ENCODE measurements at regions of chr2 and their contacts with region 1.

Region 1: GRCh38 chr2:232327105-232328041 is 51.2 kb upstream of the ALPP start:
- DNase-seq: peak; percentile 31
- H3K4me3 ChIP-seq: no peak overlapping the region
- H3K27ac ChIP-seq: no peak overlapping the region
- H3K4me1 ChIP-seq: peaks cover 24% of the 10 kb centered on the region
- H3K27me3 ChIP-seq: no peaks in the 10 kb centered on the region
- CTCF ChIP-seq: peak; percentile 78 to 81

Region 2: DNA sequence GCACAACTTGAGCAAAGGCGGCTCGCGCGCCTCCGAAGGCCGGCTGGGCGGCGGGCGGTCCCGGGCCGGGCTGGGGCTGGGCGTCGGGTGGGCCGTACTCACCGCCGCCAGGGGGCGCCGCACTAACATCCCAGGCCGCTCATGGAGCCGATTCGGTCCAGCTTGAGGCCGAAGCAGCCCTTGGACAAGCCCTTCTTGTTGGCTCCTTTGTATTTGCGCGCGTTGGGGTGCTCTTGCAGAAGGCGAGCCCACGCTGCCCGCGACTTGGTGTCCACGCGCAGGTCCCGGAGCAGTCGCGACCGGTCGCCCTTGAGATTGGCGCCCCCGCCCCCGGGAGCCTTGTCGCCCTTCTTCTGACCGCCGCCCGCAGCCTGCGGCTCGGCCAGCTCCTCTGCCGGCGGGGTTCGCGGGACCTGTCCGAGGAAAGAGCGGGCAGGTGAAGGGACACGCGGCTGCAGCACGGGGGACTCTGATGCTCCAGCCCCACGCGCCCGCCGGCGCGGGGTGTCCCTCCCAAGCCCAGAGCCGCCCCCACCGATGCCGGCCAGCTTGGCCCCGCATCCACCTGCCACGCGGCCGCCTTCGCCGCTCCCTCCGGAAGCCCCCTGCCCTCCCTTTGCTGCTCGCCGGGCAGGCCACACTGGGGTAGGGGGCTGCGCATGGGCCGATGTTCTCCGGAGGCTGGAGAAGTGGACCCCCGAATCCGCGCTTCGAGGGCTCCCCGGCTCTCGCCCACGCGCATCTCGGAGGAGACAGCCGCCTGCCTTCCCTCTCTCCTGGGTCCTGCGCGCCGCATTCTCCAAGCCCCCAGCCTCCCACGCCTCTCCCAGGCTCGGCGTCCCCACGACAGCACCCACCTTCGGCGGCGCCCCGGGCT is 401.8 kb before region 1 on chr2:
- CTCF ChIA-PET with region 1: no interaction called
- dilution Hi-C with region 1: loop called (anchors 5 kb)
- in situ Hi-C with region 1: no loop called
- intact Hi-C with region 1: loop called (anchors 1 kb)
- DNase-seq: peak; percentile 66
- H3K4me3 ChIP-seq: peak overlapping the region; percentile 32 to 53 (median 50)
- H3K27ac ChIP-seq: no peak overlapping the region
- H3K4me1 ChIP-seq: peaks cover 20% of the 10 kb centered on the region
- H3K27me3 ChIP-seq: peaks cover 13% of the 10 kb centered on the region
- CTCF ChIP-seq: peak; percentile 59 to 72

Region 3: GRCh38 chr2:232142049-232142448 is 185.3 kb before region 1 on chr2:
- CTCF ChIA-PET with region 1: no interaction called
- dilution Hi-C with region 1: no loop called
- in situ Hi-C with region 1: loop called in 1 of 2 experiments (anchors 10 kb)
- intact Hi-C with region 1: loop called (anchors 1 kb)
- DNase-seq: peak; percentile 14
- H3K4me3 ChIP-seq: no peak overlapping the region
- H3K27ac ChIP-seq: no peak overlapping the region
- H3K4me1 ChIP-seq: no peaks in the 10 kb centered on the region
- H3K27me3 ChIP-seq: no peaks in the 10 kb centered on the region
- CTCF ChIP-seq: peak; percentile 50 to 74

Region 4: DNA sequence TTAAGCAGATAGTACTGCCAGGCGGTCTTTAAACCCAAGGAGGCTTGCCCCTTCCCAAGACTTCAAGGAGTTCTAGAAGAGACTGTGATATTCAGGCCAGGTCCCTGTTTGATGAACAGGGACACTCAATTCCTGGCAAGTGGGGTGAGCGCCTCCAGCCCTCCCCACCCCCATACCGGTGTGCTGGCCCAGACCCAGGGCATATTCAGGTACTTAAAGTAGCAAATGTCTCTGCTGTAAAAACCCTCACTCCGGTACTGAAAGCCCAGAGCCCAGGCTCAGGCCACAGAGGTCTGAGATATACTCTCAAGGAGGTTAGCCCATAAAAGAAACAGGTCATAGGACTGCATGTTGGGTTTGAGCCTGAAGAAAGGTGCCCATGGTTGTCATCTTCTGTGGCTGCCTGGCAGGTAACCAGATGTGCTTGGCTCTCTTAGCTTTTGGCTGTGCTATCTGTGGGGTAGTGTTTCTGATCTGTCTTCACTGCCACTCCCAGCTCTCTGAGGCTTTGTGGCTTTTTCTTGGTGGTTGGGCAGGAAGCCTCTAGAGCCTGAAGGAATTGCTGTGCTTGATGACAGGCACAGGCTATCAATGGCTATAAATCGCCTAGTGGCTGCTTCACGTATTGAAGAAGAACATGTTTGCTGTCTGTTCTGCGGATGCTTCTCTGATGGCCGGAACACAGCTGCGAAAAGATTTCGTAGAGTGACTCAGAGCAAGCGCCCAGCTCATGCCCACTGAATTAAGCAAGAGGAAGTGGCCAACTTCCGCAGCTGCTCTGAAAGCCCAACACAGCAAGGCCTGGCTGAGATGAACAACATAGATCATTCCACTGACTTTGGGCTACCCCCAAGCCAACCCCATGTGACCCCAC is 12.1 kb before region 1 on chr2:
- CTCF ChIA-PET with region 1: interaction called, 3 read pairs
- dilution Hi-C with region 1: no loop called
- in situ Hi-C with region 1: no loop called
- intact Hi-C with region 1: loop called (anchors 1 kb)
- DNase-seq: peak; percentile 96
- H3K4me3 ChIP-seq: no peak overlapping the region
- H3K27ac ChIP-seq: peak overlapping the region; percentile 73
- H3K4me1 ChIP-seq: peaks cover 40% of the 10 kb centered on the region
- H3K27me3 ChIP-seq: no peaks in the 10 kb centered on the region
- CTCF ChIP-seq: peak; percentile 49 to 54

Region 5: DNA sequence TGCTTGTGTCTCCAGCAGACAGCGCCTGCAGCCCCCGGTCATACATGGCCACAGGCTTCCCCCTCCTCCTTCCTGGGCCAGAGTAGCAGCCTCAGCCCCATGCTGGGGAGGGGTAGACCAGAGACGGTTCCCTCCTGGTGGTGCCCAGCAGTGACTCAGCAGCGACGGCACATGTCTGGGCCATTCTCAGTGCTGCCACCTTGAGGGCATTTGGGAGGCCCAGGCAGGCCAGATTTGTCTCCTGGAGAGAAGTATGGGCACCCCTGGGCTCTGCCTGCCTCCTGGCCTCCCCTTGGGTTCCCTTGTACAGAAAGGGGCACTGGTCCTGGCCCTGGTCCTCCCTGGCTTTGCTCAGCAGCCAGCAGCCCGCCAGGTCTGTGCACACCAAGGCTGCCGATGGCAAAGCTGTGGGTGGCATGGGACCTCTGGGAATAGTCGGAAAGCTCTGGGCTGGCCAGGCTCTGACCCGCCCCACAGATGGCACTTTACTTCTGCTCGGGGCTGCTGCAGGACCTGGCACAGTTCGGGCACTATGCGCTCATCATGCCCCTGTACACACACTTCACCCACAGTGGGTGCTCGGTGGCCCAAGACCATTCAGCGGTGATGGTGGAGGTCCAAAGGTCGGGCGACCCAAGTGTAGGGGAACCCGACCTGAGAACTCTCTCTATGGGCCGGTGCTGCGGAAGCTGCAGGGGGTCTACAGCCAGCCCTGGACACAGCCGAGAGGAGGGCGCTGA is 117.2 kb after region 1 on chr2:
- CTCF ChIA-PET with region 1: no interaction called
- dilution Hi-C with region 1: no loop called
- in situ Hi-C with region 1: loop called in 1 of 2 experiments (anchors 25 kb)
- intact Hi-C with region 1: no loop called
- DNase-seq: peak; percentile 54
- H3K4me3 ChIP-seq: no peak overlapping the region
- H3K27ac ChIP-seq: no peak overlapping the region
- H3K4me1 ChIP-seq: no peaks in the 10 kb centered on the region
- H3K27me3 ChIP-seq: no peaks in the 10 kb centered on the region
- CTCF ChIP-seq: peak; percentile 75 to 80

Region 6: DNA sequence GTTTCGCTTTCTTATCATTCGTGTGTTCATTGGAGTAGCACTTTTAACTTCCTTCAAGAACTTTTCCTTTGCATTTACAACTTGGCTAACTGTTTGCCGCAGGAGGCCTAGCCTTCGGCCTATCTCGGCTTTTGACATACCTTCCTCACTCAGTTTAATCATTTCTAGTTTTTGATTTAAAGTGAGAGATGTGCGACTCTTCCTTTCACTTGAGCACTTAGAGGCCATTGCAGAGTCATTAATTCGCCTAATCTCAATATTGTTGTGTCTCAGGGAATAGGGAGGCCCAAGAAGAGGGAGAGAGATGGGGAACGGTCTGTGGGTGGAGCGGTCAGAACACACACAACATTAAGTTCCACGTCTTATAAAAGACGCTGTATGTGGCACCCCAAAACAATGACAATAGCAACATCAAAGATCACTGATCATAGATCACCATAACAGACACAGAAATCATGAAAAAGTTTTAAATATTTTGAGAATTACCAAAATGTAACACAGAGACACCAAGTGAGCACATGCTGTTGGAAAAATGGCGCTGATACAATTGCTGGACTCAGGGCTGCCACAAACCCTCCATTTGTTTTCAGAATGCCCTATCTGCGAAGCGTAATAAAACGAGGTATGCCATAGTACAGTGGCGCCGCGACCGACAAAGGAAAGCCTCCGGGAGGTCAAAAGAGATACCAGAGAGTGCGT is 222.4 kb after region 1 on chr2:
- CTCF ChIA-PET with region 1: no interaction called
- dilution Hi-C with region 1: no loop called
- in situ Hi-C with region 1: no loop called
- intact Hi-C with region 1: no loop called
- DNase-seq: no peak
- H3K4me3 ChIP-seq: peak overlapping the region; percentile 71 to 79 (median 78)
- H3K27ac ChIP-seq: peak overlapping the region; percentile 88
- H3K4me1 ChIP-seq: peaks cover 9% of the 10 kb centered on the region
- H3K27me3 ChIP-seq: no peaks in the 10 kb centered on the region
- CTCF ChIP-seq: no peak